WTC11 (cell line): ENCODE measurements at regions of chr20 and their contacts with region 1.

Region 1: DNA sequence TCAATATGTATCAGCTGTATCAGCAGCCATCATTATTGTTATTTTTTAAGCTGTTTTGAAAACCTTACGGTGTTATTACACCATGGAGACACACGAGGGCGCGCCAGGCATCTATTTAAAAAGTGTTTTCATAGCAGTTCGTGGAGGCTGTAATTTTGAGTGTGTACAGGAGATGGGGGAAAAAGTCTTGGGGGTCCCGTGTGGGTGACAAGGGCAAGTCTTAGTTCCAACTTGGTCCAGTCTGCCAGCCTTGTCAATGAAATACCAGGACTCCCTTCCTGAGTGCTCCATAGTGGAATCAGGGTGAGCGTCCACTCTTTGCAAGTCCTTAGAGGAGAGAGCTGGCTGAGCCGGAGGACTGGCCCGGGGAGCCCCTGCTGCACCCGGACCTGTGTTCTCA is 43.3 kb downstream of the SLC2A10 start:
- DNase-seq: peak; percentile 73
- ATAC-seq: peak; percentile 41
- H3K4me3 Mint-ChIP-seq: peak overlapping the region; percentile 50; the same call in 1 of the 2 replicates
- H3K27ac Mint-ChIP-seq: no peak overlapping the region
- H3K4me1 Mint-ChIP-seq: no peaks in the 10 kb centered on the region
- H3K27me3 Mint-ChIP-seq: peaks cover 3% of the 10 kb centered on the region; the same call in 1 of the 2 replicates
- CTCF ChIP-seq: peak; percentile 77

Region 2: GRCh38 chr20:46721476-46721875 is 31.3 kb before region 1 on chr20:
- CTCF ChIA-PET with region 1: no interaction called
- POLR2A ChIA-PET with region 1: no interaction called
- DNase-seq: no peak
- ATAC-seq: no peak
- H3K4me3 Mint-ChIP-seq: no peak overlapping the region
- H3K27ac Mint-ChIP-seq: no peak overlapping the region
- H3K4me1 Mint-ChIP-seq: no peaks in the 10 kb centered on the region
- H3K27me3 Mint-ChIP-seq: peaks cover 5% of the 10 kb centered on the region
- CTCF ChIP-seq: no peak

Region 3: DNA sequence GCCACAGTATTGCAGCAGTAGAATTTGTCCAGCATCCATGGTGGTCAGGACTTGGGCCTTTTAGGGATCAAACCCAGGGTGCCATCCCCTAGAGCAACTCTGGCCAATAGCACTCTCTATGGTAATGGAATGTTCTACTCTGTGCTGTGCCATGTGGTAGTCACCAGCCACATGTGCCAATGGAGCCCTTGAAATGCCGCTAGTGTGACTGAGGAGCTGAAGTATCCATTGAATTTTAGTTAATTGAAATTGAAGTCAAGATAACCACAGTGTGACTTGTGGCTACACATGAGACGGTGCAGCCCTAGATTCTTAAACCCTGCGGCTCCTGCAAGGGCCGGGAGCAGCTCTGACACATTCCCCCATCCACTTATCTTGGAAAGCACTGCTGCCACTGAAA is 11.3 kb after region 1 on chr20:
- CTCF ChIA-PET with region 1: interaction called, 18 read pairs
- POLR2A ChIA-PET with region 1: no interaction called
- DNase-seq: no peak
- ATAC-seq: no peak
- H3K4me3 Mint-ChIP-seq: no peak overlapping the region
- H3K27ac Mint-ChIP-seq: no peak overlapping the region
- H3K4me1 Mint-ChIP-seq: peaks cover 3% of the 10 kb centered on the region; the same call in 1 of the 2 replicates
- H3K27me3 Mint-ChIP-seq: no peaks in the 10 kb centered on the region
- CTCF ChIP-seq: no peak

Region 4: DNA sequence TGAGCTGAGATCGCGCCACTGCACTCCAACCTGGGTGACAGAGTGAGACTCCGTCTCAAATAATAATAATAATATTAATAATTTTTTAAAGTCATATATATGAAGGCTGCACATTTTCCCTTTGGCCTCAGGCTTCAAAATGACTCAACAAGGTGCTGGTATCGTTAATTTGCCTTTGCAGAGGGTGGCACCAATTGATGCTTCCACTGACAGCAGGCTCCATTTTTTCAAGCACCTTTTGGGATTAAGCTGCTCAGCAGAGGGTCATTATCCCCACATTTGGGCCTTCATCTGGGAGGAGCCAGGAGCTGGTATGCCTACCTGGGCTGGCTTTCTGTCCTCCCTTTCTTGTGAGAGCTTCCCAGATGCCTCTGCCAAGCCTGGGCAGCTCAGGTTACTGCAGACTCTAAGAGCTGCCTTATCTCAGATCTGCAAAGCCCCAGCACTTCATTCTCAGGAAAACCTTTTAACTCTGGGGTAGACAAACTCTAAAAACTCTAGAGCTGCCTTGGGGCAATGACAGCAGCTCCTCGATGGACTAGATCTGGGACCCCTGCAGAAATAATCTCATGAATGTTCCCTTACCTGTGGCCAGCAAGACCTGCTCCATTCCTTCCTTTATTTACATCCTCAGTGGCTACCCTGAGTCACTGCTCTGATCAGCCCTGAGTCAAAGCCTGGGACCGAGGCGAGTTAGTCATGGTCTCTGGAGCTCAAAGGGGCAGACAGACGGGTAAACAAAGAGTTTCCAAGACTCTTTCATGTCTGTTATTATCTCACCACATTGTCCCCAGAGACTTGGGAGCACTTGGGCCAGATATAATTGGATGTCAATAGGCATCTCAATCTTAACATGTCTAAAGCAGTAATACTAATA is 61.9 kb after region 1 on chr20:
- CTCF ChIA-PET with region 1: interaction called, 13 read pairs
- POLR2A ChIA-PET with region 1: no interaction called
- DNase-seq: peak; percentile 29
- ATAC-seq: peak; percentile 89
- H3K4me3 Mint-ChIP-seq: no peak overlapping the region
- H3K27ac Mint-ChIP-seq: no peak overlapping the region
- H3K4me1 Mint-ChIP-seq: peaks cover 22% of the 10 kb centered on the region
- H3K27me3 Mint-ChIP-seq: peaks cover 7% of the 10 kb centered on the region
- CTCF ChIP-seq: no peak

Region 5: DNA sequence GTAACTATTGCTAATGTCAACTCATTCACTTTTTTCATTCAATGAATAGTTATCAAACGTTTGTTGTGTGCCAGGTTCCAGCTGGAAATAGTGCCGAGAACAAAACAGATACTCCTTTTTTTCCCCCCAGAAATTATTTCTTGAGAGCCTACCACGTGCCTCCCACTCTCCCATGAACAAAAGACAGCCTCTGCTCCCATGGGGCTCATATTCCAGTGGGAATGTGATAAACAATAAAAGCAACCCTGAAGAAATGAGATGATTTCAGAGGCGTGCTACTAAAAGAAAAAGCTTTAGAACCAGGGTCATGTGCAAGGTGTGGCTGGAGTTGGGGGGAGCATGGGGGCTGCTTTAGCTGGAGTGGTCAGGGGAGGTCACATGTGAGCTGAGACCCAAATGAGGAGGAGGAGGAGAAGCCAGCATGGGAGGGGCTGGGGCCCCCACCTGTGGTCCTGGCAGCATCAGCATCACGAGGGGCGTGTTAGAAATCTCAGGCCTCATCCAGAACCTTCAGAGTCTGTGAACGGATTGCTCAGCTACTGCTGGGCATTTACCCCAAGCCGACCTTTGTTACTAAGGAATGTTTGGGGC is 299.3 kb after region 1 on chr20:
- CTCF ChIA-PET with region 1: no interaction called
- POLR2A ChIA-PET with region 1: no interaction called
- DNase-seq: no peak
- ATAC-seq: no peak
- H3K4me3 Mint-ChIP-seq: no peak overlapping the region
- H3K27ac Mint-ChIP-seq: no peak overlapping the region
- H3K4me1 Mint-ChIP-seq: no peaks in the 10 kb centered on the region
- H3K27me3 Mint-ChIP-seq: no peaks in the 10 kb centered on the region
- CTCF ChIP-seq: no peak

Region 6: GRCh38 chr20:47148059-47148458 is 395.3 kb after region 1 on chr20:
- CTCF ChIA-PET with region 1: interaction called, 11 read pairs
- POLR2A ChIA-PET with region 1: no interaction called
- DNase-seq: no peak
- ATAC-seq: no peak
- H3K4me3 Mint-ChIP-seq: no peak overlapping the region
- H3K27ac Mint-ChIP-seq: no peak overlapping the region
- H3K4me1 Mint-ChIP-seq: 0 out of 2 replicates have a peak, but pooled peaks cover 2% of the 10 kb centered on the region
- H3K27me3 Mint-ChIP-seq: peaks cover 16% of the 10 kb centered on the region
- CTCF ChIP-seq: no peak